ENCODE measurements at regions of chr14 and their contacts with region 1.

Region 1: GRCh38 chr14:39376667-39377403 is 55.4 kb downstream of the FBXO33 start:
- DNase-seq: no peak
- H3K4me3 ChIP-seq: peak overlapping the region in 1 of 2 donors; percentile 8
- H3K27ac ChIP-seq: peak overlapping the region; percentile 75 to 82
- H3K4me1 ChIP-seq: peaks cover 0 to 19% of the 10 kb centered on the region in 2 donors
- H3K27me3 ChIP-seq: no peaks in the 10 kb centered on the region
- CTCF ChIP-seq: no peak

Region 2: DNA sequence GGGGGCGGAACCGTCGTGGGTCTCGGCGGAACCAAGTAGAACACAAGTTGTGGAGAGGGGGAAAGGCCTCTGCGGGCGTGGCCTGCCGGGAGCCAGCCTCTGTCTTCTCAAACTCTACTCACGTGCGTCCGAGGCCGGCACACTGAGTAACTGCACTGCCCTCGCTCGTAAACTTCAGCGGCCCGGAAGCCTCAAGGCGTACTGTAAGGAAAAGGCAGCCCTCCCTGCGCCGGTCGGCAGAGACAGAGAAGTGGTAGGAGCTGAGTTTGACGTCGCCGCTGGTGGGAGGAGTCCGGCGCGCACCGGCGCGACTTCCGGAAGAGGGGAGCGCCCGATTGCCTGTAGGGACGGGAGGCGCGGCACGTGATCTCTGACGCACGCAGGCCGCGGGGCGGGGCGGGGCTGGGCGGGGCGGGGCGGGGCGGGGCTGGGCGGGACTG is 55.4 kb after region 1 on chr14 and contains the start of gene FBXO33:
- intact Hi-C with region 1: loop called (anchors 2 kb)
- DNase-seq: peak; percentile 84 to 98
- H3K4me3 ChIP-seq: peak within 1 kb of the TSS; percentile 95 to 98
- H3K27ac ChIP-seq: peak within 1 kb of the TSS; percentile 93 to 95
- H3K4me1 ChIP-seq: peaks cover 0 to 12% of the 10 kb centered on the region in 2 donors
- H3K27me3 ChIP-seq: no peaks in the 10 kb centered on the region
- CTCF ChIP-seq: no peak
- total RNA-seq, gene FBXO33: 14.5 TPM